Heart left ventricle (tissue), 16 donors: ENCODE measurements at regions of chr15 and their contacts with region 1.

Region 1: GRCh38 chr15:99104788-99105513 is at the start of gene SYNM:
- DNase-seq: peak; percentile 83 to 92 (median 89)
- ATAC-seq: peak; percentile 77 to 84 (median 82)
- H3K4me3 ChIP-seq: peak within 1 kb of the TSS; percentile 60 to 79 (median 72)
- H3K27ac ChIP-seq: peak within 1 kb of the TSS; percentile 48 to 98 (median 92)
- H3K4me1 ChIP-seq: peaks cover 0 to 56% (median 25%) of the 10 kb centered on the region in 12 donors
- H3K27me3 ChIP-seq: peaks cover 0 to 55% (median 0%) of the 10 kb centered on the region in 9 donors
- CTCF ChIP-seq: peak; percentile 42 to 98 (median 93)
- POLR2A ChIP-seq: peak in 1 of 2 donors; percentile 96
- total RNA-seq, gene SYNM: 197 to 455 (median 311) TPM

Region 2: DNA sequence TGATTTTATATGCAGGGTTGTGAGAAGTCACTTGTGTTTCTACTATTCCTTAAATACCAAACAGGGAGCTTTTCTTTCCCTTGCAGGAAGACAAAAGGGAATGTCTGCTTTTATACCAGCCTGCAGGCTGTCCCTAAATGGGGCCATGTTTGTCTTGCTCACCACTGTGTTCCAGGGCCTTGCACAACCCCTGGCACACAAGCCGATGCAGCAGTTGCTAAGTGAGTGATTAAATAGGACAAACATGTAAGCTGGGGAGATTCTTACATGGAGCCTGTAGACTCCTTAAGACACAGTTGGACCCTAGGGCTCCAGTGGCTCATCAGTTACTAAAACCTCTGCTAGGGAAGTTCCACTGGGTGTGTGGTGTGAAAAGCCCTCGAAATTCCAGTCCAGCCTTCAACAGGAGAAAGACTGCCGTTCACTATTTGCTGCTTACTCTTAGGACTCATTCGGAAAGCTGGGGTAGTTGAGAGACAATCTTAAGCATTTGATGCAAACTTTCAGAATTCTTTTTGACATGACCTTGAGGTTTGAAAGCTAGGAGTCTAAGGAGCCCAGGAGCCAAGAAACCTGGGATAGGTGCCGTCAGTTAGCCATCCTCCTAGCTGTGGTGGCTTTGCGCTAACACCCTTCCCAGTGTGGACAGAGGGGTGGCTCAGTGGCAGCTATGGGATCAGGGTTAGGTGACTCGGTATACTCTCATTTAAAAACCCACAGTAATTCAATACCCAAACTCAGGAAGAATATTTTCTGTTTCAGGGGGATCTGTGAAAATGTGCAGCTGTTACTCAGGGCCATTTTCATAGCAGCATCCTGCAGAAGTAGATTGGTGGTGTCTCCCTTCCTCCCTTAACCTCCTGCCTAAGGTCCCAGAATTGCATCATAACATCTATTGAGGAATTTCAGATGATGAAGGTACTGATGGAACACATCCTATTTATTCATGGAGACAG is 39.0 kb after region 1 on chr15:
- intact Hi-C with region 1: loop called in 1 of 10 experiments (anchors 5 kb)
- DNase-seq: peak in 2 of 5 donors; percentile 74 to 76
- ATAC-seq: peak; percentile 62 to 85 (median 78)
- H3K4me3 ChIP-seq: no peak overlapping the region
- H3K27ac ChIP-seq: peak overlapping the region in 4 of 12 donors; percentile 43 to 98 (median 59)
- H3K4me1 ChIP-seq: peaks cover 0 to 31% (median 7%) of the 10 kb centered on the region in 12 donors
- H3K27me3 ChIP-seq: no peaks in the 10 kb centered on the region
- CTCF ChIP-seq: no peak
- POLR2A ChIP-seq: no peak

Region 3: DNA sequence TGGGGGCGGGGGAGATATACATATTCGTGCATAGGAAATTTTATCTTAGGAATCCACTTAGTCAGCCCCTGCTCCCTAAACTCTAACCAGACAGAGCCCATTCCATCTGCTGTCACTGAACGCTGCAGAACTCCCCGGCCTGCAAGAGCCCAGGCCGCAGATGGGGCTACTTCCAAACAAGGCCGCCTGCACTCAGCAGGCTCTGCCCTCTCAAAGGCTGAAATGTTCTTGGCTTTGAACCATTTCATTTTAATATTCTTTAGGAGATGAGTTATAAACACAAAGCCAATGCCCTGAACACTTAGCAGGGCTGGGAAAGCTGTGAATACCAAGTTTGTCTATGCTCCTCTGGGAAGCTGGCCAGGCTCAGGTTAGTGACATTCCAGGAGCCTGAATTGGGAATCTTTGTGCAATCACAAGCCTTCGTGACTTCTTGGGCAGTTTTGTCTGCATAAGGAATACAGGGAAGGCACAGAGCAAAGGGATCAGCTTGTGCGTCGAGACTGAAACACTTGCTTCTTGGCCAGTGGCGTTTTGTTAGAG is 64.9 kb after region 1 on chr15:
- intact Hi-C with region 1: loop called in 4 of 10 experiments (anchors 1 to 5 kb)
- DNase-seq: peak in 2 of 5 donors; percentile 29 to 53
- ATAC-seq: peak; percentile 40 to 57 (median 52)
- H3K4me3 ChIP-seq: no peak overlapping the region
- H3K27ac ChIP-seq: peak overlapping the region; percentile 62 to 94 (median 83)
- H3K4me1 ChIP-seq: peaks cover 0 to 65% (median 20%) of the 10 kb centered on the region in 12 donors
- H3K27me3 ChIP-seq: no peaks in the 10 kb centered on the region
- CTCF ChIP-seq: no peak
- POLR2A ChIP-seq: no peak

Region 4: GRCh38 chr15:99181545-99181971 is 76.6 kb after region 1 on chr15:
- intact Hi-C with region 1: loop called in 1 of 10 experiments (anchors 2 kb)
- DNase-seq: peak in 4 of 5 donors; percentile 39 to 67 (median 55)
- ATAC-seq: peak; percentile 76 to 90 (median 83)
- H3K4me3 ChIP-seq: peak overlapping the region in 1 of 12 donors; percentile 3
- H3K27ac ChIP-seq: peak overlapping the region; percentile 26 to 94 (median 81)
- H3K4me1 ChIP-seq: peaks cover 4 to 50% (median 29%) of the 10 kb centered on the region in 12 donors
- H3K27me3 ChIP-seq: no peaks in the 10 kb centered on the region
- CTCF ChIP-seq: no peak
- POLR2A ChIP-seq: no peak

Region 5: GRCh38 chr15:99213187-99213811 is 108.3 kb after region 1 on chr15:
- intact Hi-C with region 1: loop called (anchors 1 to 2 kb)
- DNase-seq: peak; percentile 75 to 86 (median 77)
- ATAC-seq: peak; percentile 60 to 84 (median 82)
- H3K4me3 ChIP-seq: no peak overlapping the region
- H3K27ac ChIP-seq: peak overlapping the region in 7 of 12 donors; percentile 40 to 85 (median 67)
- H3K4me1 ChIP-seq: peaks cover 0 to 16% (median 0%) of the 10 kb centered on the region in 12 donors
- H3K27me3 ChIP-seq: no peaks in the 10 kb centered on the region
- CTCF ChIP-seq: peak; percentile 80 to 97 (median 92)
- POLR2A ChIP-seq: no peak

Region 6: GRCh38 chr15:100438570-100438969 is 1333.6 kb after region 1 on chr15:
- intact Hi-C with region 1: no loop called
- DNase-seq: peak; percentile 63 to 88 (median 76)
- ATAC-seq: peak in 2 of 4 donors; percentile 26 to 59
- H3K4me3 ChIP-seq: no peak overlapping the region
- H3K27ac ChIP-seq: no peak overlapping the region
- H3K4me1 ChIP-seq: peaks cover 0 to 8% (median 2%) of the 10 kb centered on the region in 12 donors
- H3K27me3 ChIP-seq: no peaks in the 10 kb centered on the region
- CTCF ChIP-seq: no peak
- POLR2A ChIP-seq: no peak